ENCODE measurements at regions of chr14 and their contacts with region 1.

Region 1: GRCh38 chr14:56816574-56817391 is 6.5 kb upstream of the OTX2 start:
- DNase-seq: peak in 1 of 2 experiments; percentile 63
- H3K4me3 ChIP-seq: peak overlapping the region; percentile 76
- H3K4me1 ChIP-seq: peaks cover 47% of the 10 kb centered on the region
- H3K27me3 ChIP-seq: no peaks in the 10 kb centered on the region

Region 2: GRCh38 chr14:56579345-56580220 is 237.2 kb before region 1 on chr14 and contains the start of gene TMEM260:
- in situ Hi-C with region 1: loop called (anchors 10 kb)
- DNase-seq: peak; percentile 70 to 93
- H3K4me3 ChIP-seq: peak within 1 kb of the TSS; percentile 80
- H3K4me1 ChIP-seq: peaks cover 21% of the 10 kb centered on the region
- H3K27me3 ChIP-seq: no peaks in the 10 kb centered on the region

Region 3: DNA sequence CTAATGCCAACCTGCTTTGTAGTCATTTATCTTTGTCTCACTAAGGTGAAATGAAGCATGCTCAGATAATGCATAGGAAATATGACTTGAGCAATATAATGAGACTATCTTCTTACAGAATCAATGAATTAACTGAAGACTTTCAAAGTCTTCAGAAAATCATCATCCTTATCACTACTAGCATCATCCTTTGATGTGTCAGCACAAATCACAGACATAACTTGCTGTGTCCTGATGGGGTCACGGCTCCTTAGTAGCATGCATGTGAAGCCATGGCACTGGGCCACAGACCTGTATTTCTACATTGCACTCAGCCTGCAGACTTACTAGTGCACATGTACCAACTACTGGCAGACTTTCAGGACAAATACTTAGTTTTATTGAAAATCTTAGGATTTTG is 218.3 kb before region 1 on chr14:
- in situ Hi-C with region 1: no loop called
- DNase-seq: no peak
- H3K4me3 ChIP-seq: no peak overlapping the region
- H3K4me1 ChIP-seq: no peaks in the 10 kb centered on the region
- H3K27me3 ChIP-seq: no peaks in the 10 kb centered on the region

Region 4: GRCh38 chr14:56708704-56709103 is 108.1 kb before region 1 on chr14:
- in situ Hi-C with region 1: no loop called
- DNase-seq: peak; percentile 23 to 52
- H3K4me3 ChIP-seq: no peak overlapping the region
- H3K4me1 ChIP-seq: peaks cover 13% of the 10 kb centered on the region
- H3K27me3 ChIP-seq: no peaks in the 10 kb centered on the region

Region 5: DNA sequence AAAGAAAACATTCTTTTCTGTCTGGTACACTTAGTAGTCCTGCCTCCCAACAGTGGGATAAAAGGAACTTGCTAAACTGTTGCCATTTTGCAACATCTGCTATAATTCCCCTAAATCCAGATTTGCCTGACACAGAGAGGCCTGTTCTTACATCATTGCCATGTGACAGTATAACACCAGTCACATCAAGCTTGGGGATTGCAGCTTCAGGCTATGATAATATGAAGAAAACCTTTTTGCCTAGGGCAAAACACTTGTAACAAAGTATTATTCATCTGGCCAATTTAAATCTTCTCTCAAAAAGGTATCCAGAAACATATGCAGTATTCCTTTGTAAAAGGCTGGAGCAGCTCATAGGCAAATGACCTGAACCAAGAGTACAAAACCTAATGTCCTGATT is 74.4 kb after region 1 on chr14:
- in situ Hi-C with region 1: loop called (anchors 5 kb)
- DNase-seq: peak; percentile 72 to 97
- H3K4me3 ChIP-seq: no peak overlapping the region
- H3K4me1 ChIP-seq: peaks cover 90% of the 10 kb centered on the region
- H3K27me3 ChIP-seq: no peaks in the 10 kb centered on the region